PC-3 (cell line): ENCODE measurements at regions of chr1 and their contacts with region 1.

Region 1: DNA sequence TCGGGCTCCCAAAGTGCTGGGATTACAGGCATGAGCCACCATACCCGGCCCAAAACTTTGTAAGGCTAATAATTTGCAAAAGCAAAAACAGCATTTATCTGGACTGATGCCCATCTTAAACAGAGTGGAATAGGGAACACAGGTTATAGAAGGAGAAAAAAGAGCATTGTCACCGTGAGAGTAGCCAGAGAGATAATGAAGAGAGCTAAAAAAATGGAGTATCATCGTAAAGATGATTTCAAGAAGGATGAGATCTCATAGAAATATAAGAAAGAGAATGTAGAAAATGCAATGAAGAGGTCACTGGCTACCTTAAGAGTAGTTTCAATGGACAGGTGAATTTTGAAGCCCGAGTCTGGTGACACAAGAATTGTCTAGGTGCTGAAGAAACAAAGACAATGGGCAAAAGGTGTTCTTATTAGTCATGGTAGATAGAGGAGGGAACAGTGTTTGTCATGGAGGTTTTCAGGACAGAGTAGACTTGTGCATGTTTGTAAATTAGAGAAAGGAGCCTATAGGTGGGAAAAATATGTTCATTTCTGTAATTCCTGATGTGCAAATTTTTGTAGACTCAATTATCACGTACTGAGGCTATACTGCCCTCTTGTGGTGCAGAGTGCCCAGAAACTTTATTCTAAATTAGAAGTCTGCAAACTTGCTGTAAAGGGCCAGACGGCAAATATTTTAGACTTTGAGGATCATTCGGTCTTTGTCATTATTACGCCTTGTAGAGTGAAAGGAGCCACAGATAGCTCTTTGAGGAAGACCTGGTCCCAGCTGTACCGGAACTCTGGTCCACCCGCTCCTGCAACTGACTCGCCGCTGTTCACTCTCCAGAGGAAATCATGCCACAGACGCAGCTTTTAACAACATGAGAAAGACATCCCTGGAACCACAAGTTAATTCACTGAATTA is 8.1 kb upstream of the TMEM183A start:
- DNase-seq: peak; percentile 88
- ATAC-seq: peak; percentile 69
- H3K4me3 ChIP-seq: peak overlapping the region; percentile 66
- H3K27ac ChIP-seq: no peak overlapping the region
- H3K4me1 ChIP-seq: peaks cover 7% of the 10 kb centered on the region; the same call in 1 of the 2 replicates
- H3K27me3 ChIP-seq: peaks cover 27% of the 10 kb centered on the region
- CTCF ChIP-seq: peak; percentile 97

Region 2: GRCh38 chr1:202750758-202751157 is 248.3 kb before region 1 on chr1:
- CTCF ChIA-PET with region 1: no interaction called
- POLR2A ChIA-PET with region 1: no interaction called
- intact Hi-C with region 1: loop called (anchors 5 kb)
- DNase-seq: peak; percentile 11
- ATAC-seq: no peak
- H3K4me3 ChIP-seq: no peak overlapping the region
- H3K27ac ChIP-seq: no peak overlapping the region
- H3K4me1 ChIP-seq: no peaks in the 10 kb centered on the region
- H3K27me3 ChIP-seq: no peaks in the 10 kb centered on the region
- CTCF ChIP-seq: peak; percentile 36

Region 3: DNA sequence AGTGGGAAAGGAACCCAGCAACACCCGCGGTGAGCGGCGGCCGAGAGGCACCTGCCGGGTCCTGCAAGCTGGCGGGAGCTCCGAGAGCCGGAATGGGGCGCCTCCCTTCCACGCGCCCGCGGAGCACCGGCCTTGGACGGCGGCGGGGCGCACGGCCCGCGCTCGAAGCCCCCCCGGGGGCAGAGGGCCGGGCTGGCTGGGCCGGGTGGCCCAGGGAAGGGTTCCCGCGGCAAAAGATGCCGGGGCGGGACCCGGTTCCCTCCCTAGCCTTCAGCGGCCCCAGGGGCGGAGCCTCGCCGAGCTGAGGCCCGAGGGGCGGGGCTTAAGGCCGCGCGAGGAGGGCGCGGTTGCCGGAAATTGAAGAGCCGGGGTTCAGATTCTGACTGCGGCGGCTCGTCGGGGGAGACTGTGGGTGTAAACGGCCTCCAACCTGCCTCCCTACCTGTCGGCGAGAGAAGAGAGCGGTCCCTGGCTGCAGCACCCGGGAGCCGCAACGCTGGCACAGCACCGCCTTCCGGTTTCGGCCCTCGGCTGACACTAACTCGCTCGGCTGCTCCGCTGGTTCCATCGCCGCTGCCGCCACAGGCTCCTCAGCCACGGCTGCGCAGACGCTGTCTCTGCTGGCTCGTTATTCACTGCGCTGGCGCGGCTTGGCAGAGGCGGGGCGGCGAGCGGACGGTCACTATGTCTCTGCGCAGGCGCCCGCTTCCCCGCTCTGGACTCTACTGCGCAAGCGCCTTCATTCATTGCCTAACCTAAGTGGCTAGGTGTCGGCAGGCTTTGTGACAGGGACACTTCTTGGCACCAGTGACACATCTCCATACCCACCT is 110.3 kb before region 1 on chr1 and contains the start of gene RABIF:
- CTCF ChIA-PET with region 1: no interaction called
- POLR2A ChIA-PET with region 1: no interaction called
- intact Hi-C with region 1: loop called (anchors 1 kb)
- DNase-seq: peak; percentile 98
- ATAC-seq: peak; percentile 94
- H3K4me3 ChIP-seq: peak within 1 kb of the TSS; percentile 92
- H3K27ac ChIP-seq: peak within 1 kb of the TSS; percentile 78
- H3K4me1 ChIP-seq: peaks cover 13% of the 10 kb centered on the region
- H3K27me3 ChIP-seq: no peaks in the 10 kb centered on the region
- CTCF ChIP-seq: no peak; the same call in 1 of the 2 replicates
- total RNA-seq, gene RABIF: 14.8 and 15.5 TPM in 2 replicates

Region 4: DNA sequence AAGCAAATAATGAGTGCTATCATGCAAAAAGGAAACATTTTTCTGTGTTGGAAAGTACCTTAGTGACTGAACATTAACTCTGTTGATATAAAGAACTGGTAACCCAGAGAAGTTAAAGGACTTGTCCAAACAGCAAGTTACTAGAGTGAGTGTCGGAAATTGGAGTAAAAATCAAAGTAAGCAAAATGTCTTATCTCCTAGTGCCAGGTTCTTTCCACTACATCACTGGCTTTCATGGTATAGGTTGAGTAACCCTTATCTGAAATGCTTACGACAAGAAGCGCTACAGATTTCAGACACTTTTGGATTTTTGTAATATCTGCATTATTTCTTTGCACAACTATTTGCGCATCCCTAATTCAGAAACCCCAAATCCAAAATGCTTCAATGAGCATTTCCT is 93.8 kb before region 1 on chr1:
- CTCF ChIA-PET with region 1: interaction called, 16 read pairs
- POLR2A ChIA-PET with region 1: no interaction called
- intact Hi-C with region 1: no loop called
- DNase-seq: no peak
- ATAC-seq: no peak
- H3K4me3 ChIP-seq: no peak overlapping the region
- H3K27ac ChIP-seq: no peak overlapping the region
- H3K4me1 ChIP-seq: no peaks in the 10 kb centered on the region
- H3K27me3 ChIP-seq: no peaks in the 10 kb centered on the region
- CTCF ChIP-seq: no peak

Region 5: DNA sequence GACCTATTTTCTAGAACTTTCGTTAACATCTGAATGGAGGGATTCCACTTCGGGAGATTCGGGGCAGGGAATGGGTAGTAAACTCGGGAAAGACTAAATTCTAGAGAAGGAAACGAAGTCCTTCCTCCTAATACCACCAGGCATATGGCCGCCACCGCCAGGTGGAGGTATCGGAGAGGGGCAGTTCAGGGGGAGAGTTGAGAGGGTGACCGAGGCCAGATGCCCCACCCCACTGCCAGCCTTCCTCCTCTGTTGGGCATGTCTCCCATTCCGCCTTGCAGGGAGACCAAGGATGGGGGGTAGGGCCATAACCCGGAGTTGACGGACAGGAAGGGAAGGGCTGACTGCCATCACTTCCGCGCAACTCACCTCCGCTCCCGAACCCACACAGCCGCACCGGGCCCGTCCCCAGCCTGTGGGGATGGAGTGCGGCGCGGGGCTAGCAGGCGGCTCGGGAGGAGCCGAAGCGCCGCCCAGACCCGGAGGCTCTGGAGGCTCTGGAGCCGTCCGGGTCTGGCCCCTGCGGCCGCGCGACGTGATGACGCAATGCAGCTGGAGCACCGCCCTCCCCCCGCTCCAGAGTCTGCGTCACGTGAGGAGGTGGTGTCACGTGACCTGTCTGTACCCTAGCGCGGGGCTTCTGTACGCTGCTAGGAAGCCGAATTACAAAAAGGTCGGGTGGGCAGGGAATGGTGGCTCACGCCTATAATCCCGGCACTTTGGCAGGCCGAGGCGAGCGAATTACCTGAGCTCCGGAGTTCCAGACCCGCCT is 72.2 kb before region 1 on chr1 and contains the start of gene KLHL12:
- CTCF ChIA-PET with region 1: interaction called, 8 read pairs
- POLR2A ChIA-PET with region 1: no interaction called
- intact Hi-C with region 1: loop called (anchors 1 kb)
- DNase-seq: peak; percentile 98
- ATAC-seq: peak; percentile 97
- H3K4me3 ChIP-seq: peak within 1 kb of the TSS; percentile 82
- H3K27ac ChIP-seq: peak within 1 kb of the TSS; percentile 81
- H3K4me1 ChIP-seq: peaks cover 24% of the 10 kb centered on the region
- H3K27me3 ChIP-seq: no peaks in the 10 kb centered on the region
- CTCF ChIP-seq: peak; percentile 82
- total RNA-seq, gene KLHL12: 25.2 and 26.7 TPM in 2 replicates

Region 6: DNA sequence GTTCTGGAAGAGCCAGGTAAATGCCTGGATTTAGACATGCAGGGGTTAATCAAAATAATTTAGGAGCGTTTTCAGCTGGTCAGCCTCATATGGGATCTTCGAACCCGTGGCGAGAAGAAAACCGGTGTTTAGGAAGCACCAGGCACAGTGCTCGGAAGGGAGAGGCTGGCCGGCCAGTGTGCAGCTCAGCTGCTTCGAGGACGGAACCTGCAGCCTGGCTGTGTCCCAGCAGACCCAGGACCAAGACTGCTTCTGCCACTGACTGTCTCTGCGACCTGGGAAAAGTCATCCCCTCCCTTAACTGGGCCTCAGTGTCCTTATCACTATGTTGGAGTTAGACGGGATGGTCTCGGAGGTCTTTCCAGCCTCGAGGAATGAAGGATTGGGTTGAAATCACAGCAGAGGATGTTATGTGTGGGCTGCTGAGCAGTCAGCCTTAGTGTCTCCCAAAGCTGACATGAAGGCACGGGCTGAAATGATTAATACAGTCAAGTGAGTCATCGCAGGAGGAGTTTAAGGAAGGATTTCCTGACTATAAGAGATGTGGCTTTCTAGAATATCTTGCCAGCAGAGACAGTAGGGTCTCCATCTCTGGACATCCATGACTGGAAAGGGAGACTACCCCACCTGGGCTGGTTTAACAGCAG is 48.0 kb after region 1 on chr1:
- CTCF ChIA-PET with region 1: no interaction called
- POLR2A ChIA-PET with region 1: no interaction called
- intact Hi-C with region 1: no loop called
- DNase-seq: peak; percentile 79
- ATAC-seq: peak; percentile 99
- H3K4me3 ChIP-seq: no peak overlapping the region
- H3K27ac ChIP-seq: no peak overlapping the region
- H3K4me1 ChIP-seq: peaks cover 7% of the 10 kb centered on the region; the same call in 1 of the 2 replicates
- H3K27me3 ChIP-seq: no peaks in the 10 kb centered on the region
- CTCF ChIP-seq: no peak